ENCODE measurements at regions of chr12 and their contacts with region 1.

Region 1: DNA sequence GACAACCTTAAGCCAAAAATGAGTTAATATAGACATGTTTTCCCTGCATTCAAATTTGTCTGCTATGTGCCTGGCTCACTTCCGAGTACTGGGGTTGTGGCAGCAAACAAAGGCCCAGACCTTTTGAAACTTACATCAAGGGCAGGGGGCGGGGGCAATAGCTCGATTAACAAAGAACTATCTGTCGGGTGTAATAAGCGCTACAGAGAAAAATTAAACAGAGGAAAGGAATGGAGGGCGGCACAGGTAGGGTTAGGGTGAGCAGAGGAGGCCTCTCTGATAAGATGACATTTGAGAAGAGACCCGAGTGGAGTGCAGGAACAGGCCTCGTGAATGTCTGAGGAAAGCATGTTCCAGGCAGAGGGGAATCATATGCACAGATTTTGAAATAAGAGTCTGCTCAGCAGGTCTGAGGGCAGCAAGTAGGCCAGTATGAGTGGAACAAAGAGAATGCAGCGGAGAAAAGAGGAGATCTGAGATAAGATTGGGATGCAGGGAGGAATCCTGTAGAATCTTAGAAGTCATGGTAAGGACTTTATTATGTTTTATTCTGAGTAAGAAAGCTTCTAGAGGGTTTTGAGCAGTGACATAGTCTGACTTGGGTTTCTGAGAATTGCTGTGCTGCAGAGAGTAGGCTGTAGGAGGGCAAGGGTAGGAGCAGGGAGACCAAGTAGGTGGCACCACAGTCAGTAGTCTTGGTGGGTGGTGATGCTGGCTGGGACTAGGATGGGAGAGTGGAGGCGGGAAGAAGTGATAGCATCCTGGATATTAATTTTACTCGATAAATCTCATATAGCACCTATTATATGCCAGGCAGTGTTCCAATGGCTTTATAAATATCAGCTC is 52.6 kb downstream of the BICDL1 start:
- DNase-seq: no peak
- ATAC-seq: no peak
- H3K4me3 ChIP-seq: no peak overlapping the region
- H3K27ac ChIP-seq: no peak overlapping the region
- H3K4me1 ChIP-seq: no peaks in the 10 kb centered on the region
- H3K27me3 ChIP-seq: no peaks in the 10 kb centered on the region
- CTCF ChIP-seq: no peak

Region 2: DNA sequence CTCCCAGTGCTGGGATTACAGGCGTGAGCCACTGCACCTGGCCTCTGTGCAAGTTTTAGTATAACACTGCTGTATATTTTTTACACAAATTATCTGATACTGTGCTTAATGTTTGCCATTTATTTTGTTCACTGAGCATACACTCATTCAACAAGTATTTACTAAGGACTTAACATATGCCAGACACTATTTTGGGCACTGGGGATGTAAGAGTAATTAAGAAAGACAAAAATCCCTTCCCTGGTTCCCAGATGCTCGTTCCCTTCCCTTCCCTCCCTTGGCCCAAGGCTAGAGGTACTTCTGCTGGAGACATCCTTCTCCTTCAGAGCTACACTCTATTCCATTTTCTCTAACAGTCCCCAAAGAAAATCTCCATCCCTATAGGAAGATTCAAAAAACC is 177.0 kb before region 1 on chr12:
- CTCF ChIA-PET with region 1: no interaction called
- POLR2A ChIA-PET with region 1: interaction called, 14 read pairs
- in situ Hi-C with region 1: no loop called
- intact Hi-C with region 1: no loop called
- DNase-seq: no peak
- ATAC-seq: no peak
- H3K4me3 ChIP-seq: no peak overlapping the region
- H3K27ac ChIP-seq: no peak overlapping the region
- H3K4me1 ChIP-seq: no peaks in the 10 kb centered on the region
- H3K27me3 ChIP-seq: no peaks in the 10 kb centered on the region
- CTCF ChIP-seq: no peak

Region 3: DNA sequence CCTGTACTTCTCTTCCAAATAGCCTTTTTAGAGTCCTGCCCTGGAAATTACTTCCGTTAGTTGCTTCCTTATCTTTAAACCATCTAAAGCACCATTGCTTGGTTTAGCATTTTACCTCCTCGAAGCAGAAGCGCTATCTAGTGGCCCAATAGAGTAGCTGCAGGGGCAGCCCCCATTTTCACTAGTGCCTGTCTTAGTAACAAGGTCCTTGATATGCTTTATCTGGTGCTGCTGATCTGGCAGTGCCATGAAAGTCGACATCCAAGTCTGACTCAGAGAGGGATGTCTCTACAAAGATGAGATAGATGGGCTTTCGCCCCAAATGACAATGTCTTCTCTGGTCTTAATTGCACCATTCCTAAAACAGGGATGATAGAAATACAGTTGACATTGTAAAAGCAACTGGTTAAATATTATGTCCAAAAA is 139.5 kb before region 1 on chr12:
- CTCF ChIA-PET with region 1: no interaction called
- POLR2A ChIA-PET with region 1: no interaction called
- in situ Hi-C with region 1: no loop called
- intact Hi-C with region 1: no loop called
- DNase-seq: peak; percentile 66
- ATAC-seq: peak; percentile 91
- H3K4me3 ChIP-seq: no peak overlapping the region
- H3K27ac ChIP-seq: no peak overlapping the region
- H3K4me1 ChIP-seq: no peaks in the 10 kb centered on the region
- H3K27me3 ChIP-seq: no peaks in the 10 kb centered on the region
- CTCF ChIP-seq: peak; percentile 94

Region 4: GRCh38 chr12:120481022-120481767 is 439.6 kb after region 1 on chr12:
- CTCF ChIA-PET with region 1: no interaction called
- POLR2A ChIA-PET with region 1: no interaction called
- in situ Hi-C with region 1: no loop called
- intact Hi-C with region 1: no loop called
- DNase-seq: no peak
- ATAC-seq: no peak
- H3K4me3 ChIP-seq: no peak overlapping the region
- H3K27ac ChIP-seq: no peak overlapping the region
- H3K4me1 ChIP-seq: peaks cover 3% of the 10 kb centered on the region; the same call in 1 of the 2 replicates
- H3K27me3 ChIP-seq: no peaks in the 10 kb centered on the region
- CTCF ChIP-seq: no peak